Stomach (tissue), 19 donors: ENCODE measurements at regions of chr7 and their contacts with region 1.

Region 1: GRCh38 chr7:36291387-36292316 is 98.0 kb upstream of the ANLN start:
- DNase-seq: peak; percentile 91 to 95
- H3K4me3 ChIP-seq: peak overlapping the region; percentile 10 to 34 (median 32)
- H3K27ac ChIP-seq: peak overlapping the region; percentile 63 to 89 (median 85)
- H3K4me1 ChIP-seq: peaks cover 30 to 51% (median 37%) of the 10 kb centered on the region in 4 donors
- H3K27me3 ChIP-seq: no peaks in the 10 kb centered on the region
- CTCF ChIP-seq: peak in 6 of 7 experiments; percentile 89 to 99 (median 97)
- EP300 ChIP-seq: no peak
- POLR2A ChIP-seq: no peak

Region 2: GRCh38 chr7:35985126-35985754 is 306.4 kb before region 1 on chr7:
- intact Hi-C with region 1: loop called (anchors 2 kb)
- DNase-seq: peak; percentile 87 to 93
- H3K4me3 ChIP-seq: no peak overlapping the region
- H3K27ac ChIP-seq: no peak overlapping the region
- H3K4me1 ChIP-seq: peaks cover 0 to 28% (median 19%) of the 10 kb centered on the region in 4 donors
- H3K27me3 ChIP-seq: no peaks in the 10 kb centered on the region
- CTCF ChIP-seq: peak in 6 of 7 experiments; percentile 76 to 97 (median 92)
- EP300 ChIP-seq: no peak
- POLR2A ChIP-seq: no peak

Region 3: GRCh38 chr7:36152756-36153570 is 138.7 kb before region 1 on chr7 and contains the start of gene EEPD1:
- intact Hi-C with region 1: loop called (anchors 10 kb)
- DNase-seq: peak; percentile 100
- H3K4me3 ChIP-seq: peak within 1 kb of the TSS; percentile 60 to 91 (median 81)
- H3K27ac ChIP-seq: peak within 1 kb of the TSS; percentile 90 to 95 (median 94)
- H3K4me1 ChIP-seq: peaks cover 40 to 53% (median 49%) of the 10 kb centered on the region in 4 donors
- H3K27me3 ChIP-seq: no peaks in the 10 kb centered on the region
- CTCF ChIP-seq: no peak
- EP300 ChIP-seq: no peak
- POLR2A ChIP-seq: peak in 1 of 4 donors; percentile 24
- total RNA-seq, gene EEPD1: 14.0 to 134 (median 21.4) TPM

Region 4: DNA sequence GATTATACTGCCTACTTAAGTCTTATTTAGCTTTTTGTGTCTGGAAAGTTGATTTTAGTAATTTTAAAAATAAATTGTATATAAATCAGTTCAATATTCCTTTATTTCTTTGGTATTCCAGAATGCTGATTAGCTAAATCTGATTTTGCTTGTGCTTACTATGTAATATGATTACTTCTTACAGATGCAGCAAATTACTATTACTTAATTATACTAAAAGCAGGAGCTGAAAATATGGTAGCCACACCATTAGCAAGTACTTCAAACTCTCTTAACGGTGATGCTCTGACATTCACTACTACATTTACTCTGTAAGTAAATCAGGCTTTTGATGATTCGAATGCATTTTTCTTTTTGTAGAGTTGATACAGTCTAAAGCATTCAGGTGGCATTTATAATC is 132.0 kb after region 1 on chr7:
- intact Hi-C with region 1: no loop called
- DNase-seq: no peak
- H3K4me3 ChIP-seq: no peak overlapping the region
- H3K27ac ChIP-seq: no peak overlapping the region
- H3K4me1 ChIP-seq: no peaks in the 10 kb centered on the region
- H3K27me3 ChIP-seq: no peaks in the 10 kb centered on the region
- CTCF ChIP-seq: no peak
- EP300 ChIP-seq: no peak
- POLR2A ChIP-seq: no peak

Region 5: GRCh38 chr7:36440880-36441279 is 149.2 kb after region 1 on chr7:
- intact Hi-C with region 1: no loop called
- DNase-seq: peak in 1 of 2 donors; percentile 44
- H3K4me3 ChIP-seq: no peak overlapping the region
- H3K27ac ChIP-seq: no peak overlapping the region
- H3K4me1 ChIP-seq: peaks cover 0 to 9% (median 0%) of the 10 kb centered on the region in 4 donors
- H3K27me3 ChIP-seq: no peaks in the 10 kb centered on the region
- CTCF ChIP-seq: peak in 3 of 7 experiments; percentile 23 to 39 (median 24)
- EP300 ChIP-seq: no peak
- POLR2A ChIP-seq: no peak